CD14-positive monocyte (primary cell): ENCODE measurements at regions of chr11 and their contacts with region 1.

Region 1: DNA sequence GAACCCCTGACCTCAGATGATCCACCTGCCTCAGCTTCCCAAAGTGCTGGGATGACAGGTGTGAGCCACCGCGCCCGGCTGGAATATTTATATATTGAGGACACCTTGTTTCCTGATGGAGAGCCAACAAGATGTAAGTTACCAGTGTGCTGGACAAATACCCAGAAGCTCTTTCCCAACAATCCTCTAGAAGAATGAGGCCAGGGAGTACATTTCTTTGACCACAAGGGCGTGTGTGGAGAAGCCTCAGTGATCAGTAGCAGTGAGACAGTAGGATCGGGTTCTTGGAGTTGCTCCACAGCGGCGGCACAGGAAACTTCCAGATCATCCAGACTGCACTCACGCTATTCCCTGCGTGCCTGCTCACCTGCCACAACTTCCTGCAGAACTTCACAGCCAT is 10.3 kb upstream of the POLA2 start:
- DNase-seq: no peak
- H3K4me3 ChIP-seq: no peak overlapping the region
- H3K4me3 Mint-ChIP-seq: no peak overlapping the region
- H3K27ac ChIP-seq: no peak overlapping the region
- H3K27ac Mint-ChIP-seq: no peak overlapping the region
- H3K4me1 ChIP-seq: no peaks in the 10 kb centered on the region
- H3K4me1 Mint-ChIP-seq: no peaks in the 10 kb centered on the region
- H3K27me3 ChIP-seq: no peaks in the 10 kb centered on the region
- H3K27me3 Mint-ChIP-seq: peaks cover 1 to 6% (median 6%) of the 10 kb centered on the region in 3 donors
- CTCF ChIP-seq: no peak

Region 2: GRCh38 chr11:65204646-65205601 is 46.6 kb before region 1 on chr11:
- intact Hi-C with region 1: loop called (anchors 5 to 10 kb)
- DNase-seq: peak in 2 of 3 donors; percentile 27 to 51
- H3K4me3 ChIP-seq: no peak overlapping the region
- H3K4me3 Mint-ChIP-seq: no peak overlapping the region
- H3K27ac ChIP-seq: peak overlapping the region in 1 of 2 donors; percentile 11
- H3K27ac Mint-ChIP-seq: peak overlapping the region in 4 of 7 donors; percentile 19 to 76 (median 60)
- H3K4me1 ChIP-seq: peaks cover 14 to 16% of the 10 kb centered on the region in 2 donors
- H3K4me1 Mint-ChIP-seq: peaks cover 18% of the 10 kb centered on the region
- H3K27me3 ChIP-seq: no peaks in the 10 kb centered on the region
- H3K27me3 Mint-ChIP-seq: no peaks in the 10 kb centered on the region
- CTCF ChIP-seq: peak; percentile 97

Region 3: DNA sequence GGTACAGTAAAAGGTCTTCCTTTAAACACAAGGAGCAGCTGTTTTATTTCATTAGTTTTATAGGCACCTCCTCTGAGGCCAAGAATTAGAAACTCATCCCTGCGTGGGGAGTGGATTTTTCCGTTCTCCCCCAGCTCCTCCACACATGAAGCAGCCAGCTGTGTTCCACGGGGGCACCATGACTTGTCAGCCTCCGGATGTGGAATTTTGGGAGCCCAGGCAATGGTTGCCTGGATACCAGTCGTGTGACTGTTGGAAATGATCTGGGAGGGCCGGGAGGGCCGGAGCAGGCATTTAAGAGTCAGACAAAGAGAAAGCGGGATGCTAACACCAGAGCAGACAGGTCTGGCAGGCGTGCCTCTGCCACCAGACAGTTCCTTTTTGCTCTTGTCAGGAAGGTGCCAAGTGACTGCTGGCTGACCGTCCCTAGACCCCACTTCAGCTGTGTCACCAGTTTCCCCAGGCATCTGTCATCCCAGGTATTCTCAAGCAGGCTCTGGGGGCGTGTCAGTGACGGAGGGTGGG is 47.2 kb after region 1 on chr11:
- intact Hi-C with region 1: no loop called
- DNase-seq: no peak
- H3K4me3 ChIP-seq: no peak overlapping the region
- H3K4me3 Mint-ChIP-seq: no peak overlapping the region
- H3K27ac ChIP-seq: no peak overlapping the region
- H3K27ac Mint-ChIP-seq: peak overlapping the region in 3 of 7 donors; percentile 20 to 66 (median 48)
- H3K4me1 ChIP-seq: peaks cover 10 to 18% of the 10 kb centered on the region in 2 donors
- H3K4me1 Mint-ChIP-seq: peaks cover 19% of the 10 kb centered on the region
- H3K27me3 ChIP-seq: no peaks in the 10 kb centered on the region
- H3K27me3 Mint-ChIP-seq: no peaks in the 10 kb centered on the region
- CTCF ChIP-seq: no peak

Region 4: DNA sequence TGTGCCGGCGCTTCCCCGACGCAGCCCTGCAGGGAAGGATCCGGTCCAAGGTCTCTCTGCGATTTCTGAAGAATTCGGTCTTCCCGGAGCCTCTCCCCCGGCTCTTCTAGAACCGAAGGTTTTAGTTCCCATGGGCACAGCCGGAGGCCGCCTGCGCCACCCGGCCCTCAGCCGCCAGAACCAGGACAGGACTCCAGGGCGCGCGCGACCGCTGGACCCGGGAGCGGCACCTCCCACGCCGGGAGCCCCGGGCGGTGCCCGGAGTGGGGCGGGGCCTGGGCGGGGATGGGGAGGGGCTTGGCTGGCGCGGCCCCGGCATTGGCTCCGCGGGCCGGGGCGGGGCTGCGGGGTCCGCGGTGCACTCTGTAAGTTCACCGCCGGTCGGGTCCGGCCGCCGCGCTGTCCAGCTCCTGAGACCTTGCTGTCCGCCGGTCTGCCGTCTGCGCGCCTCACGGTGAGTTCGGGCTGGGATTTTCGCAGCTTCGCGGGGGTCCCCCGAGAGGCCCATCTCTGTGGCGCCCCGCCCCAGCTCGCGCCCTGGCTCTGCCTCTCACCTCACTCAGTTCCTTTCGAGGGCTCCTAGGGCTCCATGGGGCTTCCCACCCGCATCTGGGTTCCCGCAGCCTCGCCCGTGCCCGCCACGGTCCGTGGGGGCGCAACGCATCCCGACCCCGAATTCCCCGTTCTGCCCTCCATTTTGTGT is 63.2 kb after region 1 on chr11 and contains the start of gene CDC42EP2:
- intact Hi-C with region 1: no loop called
- DNase-seq: peak; percentile 63 to 76 (median 74)
- H3K4me3 ChIP-seq: peak within 1 kb of the TSS; percentile 82 to 98 (median 97)
- H3K4me3 Mint-ChIP-seq: peak within 1 kb of the TSS; percentile 86 to 92
- H3K27ac ChIP-seq: peak within 1 kb of the TSS; percentile 40 to 72
- H3K27ac Mint-ChIP-seq: peak within 1 kb of the TSS in 6 of 7 donors; percentile 53 to 89 (median 72)
- H3K4me1 ChIP-seq: peaks cover 37 to 71% of the 10 kb centered on the region in 2 donors
- H3K4me1 Mint-ChIP-seq: peaks cover 50% of the 10 kb centered on the region
- H3K27me3 ChIP-seq: peaks cover 2 to 11% of the 10 kb centered on the region in 2 donors
- H3K27me3 Mint-ChIP-seq: peaks cover 14 to 33% (median 26%) of the 10 kb centered on the region in 3 donors
- CTCF ChIP-seq: no peak
- polyA plus RNA-seq, gene CDC42EP2: 5.4 to 15.6 (median 10.1) TPM